GM23248 (cell line): ENCODE measurements at regions of chr3 and their contacts with region 1.

Region 1: DNA sequence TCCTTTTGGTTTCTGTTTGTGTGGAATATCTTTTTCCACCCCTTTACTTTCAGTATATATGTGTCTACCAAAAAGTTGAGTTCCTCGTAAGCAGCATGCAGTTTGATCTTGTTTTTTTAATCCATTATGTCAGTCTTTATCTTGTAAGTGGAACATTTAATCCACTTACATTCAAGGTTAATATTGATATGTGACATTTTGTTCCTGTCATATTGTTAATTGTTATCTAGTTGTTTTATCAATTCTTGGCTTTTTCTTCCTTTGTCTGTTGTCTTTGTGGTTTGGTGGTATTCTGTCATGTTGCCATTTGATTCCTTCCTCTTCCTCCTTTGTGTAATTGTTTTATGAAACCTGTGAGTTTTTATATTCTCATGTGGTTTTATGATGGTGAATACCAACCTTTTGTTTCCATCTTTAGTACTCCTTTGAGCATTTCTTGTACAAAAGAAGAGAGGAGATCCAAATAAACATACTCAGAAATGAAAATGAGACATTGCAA is 43.4 kb upstream of the XCR1 start:
- DNase-seq: no peak
- H3K4me3 ChIP-seq: no peak overlapping the region
- H3K27ac ChIP-seq: no peak overlapping the region
- H3K4me1 ChIP-seq: no peaks in the 10 kb centered on the region
- H3K27me3 ChIP-seq: peaks cover 37% of the 10 kb centered on the region

Region 2: DNA sequence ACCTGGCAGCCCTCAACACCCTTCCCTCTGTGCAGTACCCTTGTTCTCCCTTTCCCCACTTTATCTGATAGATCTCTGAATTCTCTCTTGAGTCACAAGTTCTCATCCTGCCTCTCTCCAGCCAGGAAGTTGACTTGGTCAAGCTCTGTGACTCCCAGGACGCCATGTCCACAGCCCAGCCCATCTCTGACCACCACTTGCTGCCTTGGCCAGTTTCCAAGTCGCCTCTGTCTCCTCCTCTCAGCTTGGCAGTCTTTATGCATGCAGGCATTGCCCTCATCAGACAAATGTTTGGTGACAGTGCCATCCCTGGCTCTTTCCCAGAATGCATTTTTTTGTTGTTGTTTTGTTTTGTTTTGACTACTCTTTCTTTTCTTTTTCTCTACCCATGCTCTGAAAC is 1396.4 kb before region 1 on chr3:
- in situ Hi-C with region 1: no loop called
- DNase-seq: no peak
- H3K4me3 ChIP-seq: no peak overlapping the region
- H3K27ac ChIP-seq: no peak overlapping the region
- H3K4me1 ChIP-seq: no peaks in the 10 kb centered on the region
- H3K27me3 ChIP-seq: no peaks in the 10 kb centered on the region

Region 3: DNA sequence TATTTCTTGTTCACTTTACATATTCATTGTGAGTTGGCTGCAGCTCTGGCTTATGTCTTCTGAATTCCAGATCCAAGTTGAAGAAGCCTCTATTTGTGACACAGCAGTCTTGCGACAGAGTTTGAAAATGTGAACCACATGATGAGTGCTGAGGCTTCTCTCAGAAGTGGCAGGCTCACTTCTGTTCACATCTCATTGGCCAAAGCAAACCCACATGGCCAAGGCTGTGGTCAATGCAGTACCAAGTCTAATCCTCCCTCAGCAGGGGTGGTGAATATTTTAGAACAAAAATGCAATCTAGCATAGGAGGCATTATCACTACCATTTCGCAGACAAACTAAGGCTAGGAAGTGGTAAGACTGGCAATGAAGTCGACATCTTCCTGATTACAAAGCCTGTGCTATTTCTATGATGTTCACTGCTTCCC is 969.6 kb before region 1 on chr3:
- in situ Hi-C with region 1: no loop called
- DNase-seq: peak; percentile 89
- H3K4me3 ChIP-seq: no peak overlapping the region
- H3K27ac ChIP-seq: peak overlapping the region; percentile 65
- H3K4me1 ChIP-seq: peaks cover 28% of the 10 kb centered on the region
- H3K27me3 ChIP-seq: no peaks in the 10 kb centered on the region

Region 4: DNA sequence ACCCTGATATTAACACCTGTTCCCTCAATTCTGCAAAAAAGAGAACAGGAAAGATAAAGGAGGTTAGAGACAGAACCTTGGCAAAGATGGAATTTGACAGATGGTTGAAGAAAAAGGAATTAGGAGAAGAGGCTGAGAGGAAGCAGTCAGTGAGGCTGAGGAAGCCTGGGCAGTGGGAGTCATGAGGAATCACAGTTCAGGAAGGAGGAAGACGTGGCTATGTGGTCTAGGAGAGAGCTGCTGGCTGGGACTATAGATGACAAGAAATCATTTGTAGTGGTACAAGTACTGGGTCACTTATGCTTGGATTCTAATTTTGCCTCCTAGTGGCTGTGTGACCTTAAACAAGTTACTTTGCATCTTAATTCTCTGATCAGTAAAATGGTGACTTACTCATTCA is 633.3 kb before region 1 on chr3:
- in situ Hi-C with region 1: no loop called
- DNase-seq: no peak
- H3K4me3 ChIP-seq: no peak overlapping the region
- H3K27ac ChIP-seq: no peak overlapping the region
- H3K4me1 ChIP-seq: 0 out of 2 replicates have a peak, but pooled peaks cover 4% of the 10 kb centered on the region
- H3K27me3 ChIP-seq: no peaks in the 10 kb centered on the region

Region 5: DNA sequence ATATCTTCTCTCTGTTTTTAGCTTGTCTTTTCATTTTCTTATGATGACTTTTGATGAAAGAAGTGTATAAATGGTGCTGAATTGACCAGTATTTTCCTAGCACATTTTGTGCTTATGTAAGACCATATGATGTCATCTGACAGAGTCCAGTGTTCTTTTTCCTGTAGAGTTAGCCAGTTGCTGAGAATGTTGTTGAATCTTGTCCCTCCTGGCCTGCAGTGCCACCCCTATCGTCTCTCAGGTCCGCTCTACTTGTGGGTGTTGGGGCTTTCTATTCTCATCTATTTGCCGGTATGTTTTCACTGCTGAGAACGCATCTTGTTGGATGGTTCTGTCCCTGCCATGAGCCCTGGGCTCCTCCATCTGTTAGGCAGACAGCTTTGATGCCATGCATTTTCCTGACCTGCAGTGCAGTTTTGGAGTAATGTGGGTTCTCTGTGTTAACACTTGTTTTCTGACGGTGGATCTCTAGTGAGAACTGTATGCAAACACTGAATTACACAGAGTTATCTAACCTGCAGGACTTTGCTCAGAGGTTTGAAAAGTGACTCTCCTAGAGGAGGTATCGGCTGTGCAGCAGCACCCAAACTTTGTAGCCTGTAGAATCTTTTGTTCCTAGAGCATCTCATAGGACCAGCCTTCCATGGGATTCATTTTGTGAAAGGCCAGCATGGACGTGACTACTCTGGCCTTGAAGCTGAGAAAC is 319.0 kb before region 1 on chr3:
- in situ Hi-C with region 1: loop called (anchors 5 kb)
- DNase-seq: peak; percentile 12
- H3K4me3 ChIP-seq: no peak overlapping the region
- H3K27ac ChIP-seq: no peak overlapping the region
- H3K4me1 ChIP-seq: no peaks in the 10 kb centered on the region
- H3K27me3 ChIP-seq: no peaks in the 10 kb centered on the region

Region 6: GRCh38 chr3:46549408-46549904 is 478.8 kb after region 1 on chr3:
- in situ Hi-C with region 1: no loop called
- DNase-seq: no peak
- H3K4me3 ChIP-seq: no peak overlapping the region
- H3K27ac ChIP-seq: no peak overlapping the region
- H3K4me1 ChIP-seq: peaks cover 15% of the 10 kb centered on the region
- H3K27me3 ChIP-seq: no peaks in the 10 kb centered on the region